Gastrocnemius medialis (tissue), 4 donors: ENCODE measurements at regions of chr11 and their contacts with region 1.

Region 1: GRCh38 chr11:111283945-111284481 is 14.3 kb upstream of the POU2AF3 start:
- DNase-seq: peak; percentile 54 to 57
- ATAC-seq: peak; percentile 74 to 88
- H3K4me3 ChIP-seq: peak overlapping the region in 2 of 4 donors; percentile 9 to 13
- H3K27ac ChIP-seq: peak overlapping the region; percentile 48 to 62 (median 56)
- H3K4me1 ChIP-seq: peaks cover 4 to 5% of the 10 kb centered on the region in 2 donors
- H3K27me3 ChIP-seq: no peaks in the 10 kb centered on the region
- CTCF ChIP-seq: no peak
- POLR2A ChIP-seq: no peak

Region 2: GRCh38 chr11:111250936-111251335 is 33.1 kb before region 1 on chr11:
- in situ Hi-C with region 1: no loop called
- intact Hi-C with region 1: no loop called
- DNase-seq: no peak
- ATAC-seq: no peak
- H3K4me3 ChIP-seq: no peak overlapping the region
- H3K27ac ChIP-seq: no peak overlapping the region
- H3K4me1 ChIP-seq: no peaks in the 10 kb centered on the region
- H3K27me3 ChIP-seq: no peaks in the 10 kb centered on the region
- CTCF ChIP-seq: no peak
- POLR2A ChIP-seq: no peak

Region 3: DNA sequence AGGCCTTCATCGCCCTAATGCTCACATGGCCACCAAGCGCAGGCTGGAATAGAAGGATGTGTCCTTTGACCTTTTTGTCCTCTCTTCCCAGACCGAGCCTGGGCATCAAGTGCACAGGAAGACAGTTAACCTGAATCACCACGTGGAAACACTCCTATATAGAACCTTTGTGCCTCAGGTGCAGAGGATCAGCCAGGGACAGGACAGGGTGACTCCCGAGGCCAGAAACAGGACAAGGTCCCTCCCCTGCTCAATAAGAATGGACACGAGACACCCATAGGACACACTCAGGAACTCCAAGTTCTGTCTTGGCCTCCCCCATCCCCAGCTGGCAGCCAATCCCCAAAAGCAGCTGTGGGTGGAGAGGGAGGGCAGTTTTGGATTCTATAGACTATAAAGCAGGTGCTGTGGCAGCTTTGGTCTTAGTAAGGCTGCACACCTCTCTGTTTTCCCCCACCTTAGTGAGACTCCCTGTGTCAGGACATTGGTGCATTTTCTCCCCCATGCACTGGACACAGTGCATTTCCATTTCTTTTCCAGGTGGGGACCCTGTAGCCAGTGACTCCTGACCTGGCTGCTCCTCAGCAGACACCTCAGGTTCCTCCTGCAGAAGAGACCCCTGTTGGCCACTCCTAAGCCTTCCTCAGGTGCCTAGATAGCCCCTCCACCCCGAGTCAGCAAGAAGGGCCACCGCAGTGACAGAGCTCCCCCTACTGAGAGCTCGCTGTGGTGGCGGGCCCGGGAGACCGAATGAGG is 138.7 kb after region 1 on chr11:
- in situ Hi-C with region 1: loop called in 2 of 4 experiments (anchors 5 kb)
- intact Hi-C with region 1: loop called (anchors 1 kb)
- DNase-seq: no peak
- ATAC-seq: peak; percentile 38 to 58
- H3K4me3 ChIP-seq: no peak overlapping the region
- H3K27ac ChIP-seq: no peak overlapping the region
- H3K4me1 ChIP-seq: peaks cover 7 to 14% of the 10 kb centered on the region in 2 donors
- H3K27me3 ChIP-seq: no peaks in the 10 kb centered on the region
- CTCF ChIP-seq: peak; percentile 21 to 66 (median 57)
- POLR2A ChIP-seq: no peak

Region 4: GRCh38 chr11:111429066-111429506 is 145.1 kb after region 1 on chr11:
- in situ Hi-C with region 1: loop called in 2 of 4 experiments (anchors 5 kb)
- intact Hi-C with region 1: no loop called
- DNase-seq: peak in 1 of 2 donors; percentile 63
- ATAC-seq: peak; percentile 74 to 76
- H3K4me3 ChIP-seq: no peak overlapping the region
- H3K27ac ChIP-seq: no peak overlapping the region
- H3K4me1 ChIP-seq: no peaks in the 10 kb centered on the region
- H3K27me3 ChIP-seq: no peaks in the 10 kb centered on the region
- CTCF ChIP-seq: peak in 4 of 5 experiments; percentile 31 to 56 (median 50)
- POLR2A ChIP-seq: no peak

Region 5: GRCh38 chr11:111441443-111441842 is 157.4 kb after region 1 on chr11:
- in situ Hi-C with region 1: loop called in 3 of 4 experiments (anchors 5 kb)
- intact Hi-C with region 1: loop called (anchors 1 kb)
- DNase-seq: no peak
- ATAC-seq: no peak
- H3K4me3 ChIP-seq: no peak overlapping the region
- H3K27ac ChIP-seq: no peak overlapping the region
- H3K4me1 ChIP-seq: peaks cover 4 to 8% of the 10 kb centered on the region in 2 donors
- H3K27me3 ChIP-seq: no peaks in the 10 kb centered on the region
- CTCF ChIP-seq: no peak
- POLR2A ChIP-seq: no peak

Region 6: DNA sequence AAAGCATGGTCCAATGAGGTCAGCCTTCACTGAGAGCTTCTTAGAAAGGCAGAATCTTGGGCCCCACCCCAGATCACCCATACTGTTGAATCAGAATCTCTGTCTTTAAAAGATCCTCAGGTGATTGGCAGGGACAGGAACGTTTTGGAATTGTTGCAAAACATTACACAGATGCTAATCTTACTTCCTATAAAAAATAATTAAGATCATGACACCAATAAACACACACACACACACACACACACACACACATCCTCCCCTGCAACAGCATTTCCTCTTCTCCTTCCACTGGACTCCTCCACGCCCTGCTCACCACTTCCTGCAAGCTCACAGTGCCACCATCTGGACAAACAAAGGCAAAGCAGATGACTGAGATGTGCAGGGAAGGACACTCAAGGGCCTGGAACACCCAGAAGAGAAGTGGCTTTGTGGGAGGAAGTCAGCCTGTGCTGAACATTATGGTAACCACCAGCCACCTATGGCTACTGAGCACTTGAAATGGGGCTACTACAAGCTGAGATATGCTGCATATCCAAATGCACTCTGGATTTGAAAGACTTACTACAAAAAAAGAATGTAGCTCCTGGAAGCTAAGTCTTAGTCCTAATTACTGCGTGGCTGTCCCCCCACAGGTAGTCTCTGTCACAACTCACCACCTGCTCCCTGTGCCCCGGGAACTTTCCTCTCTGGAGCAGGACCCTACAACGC is 162.5 kb after region 1 on chr11:
- in situ Hi-C with region 1: loop called in 3 of 4 experiments (anchors 5 kb)
- intact Hi-C with region 1: loop called (anchors 1 kb)
- DNase-seq: peak; percentile 72
- ATAC-seq: peak; percentile 91 to 96
- H3K4me3 ChIP-seq: no peak overlapping the region
- H3K27ac ChIP-seq: no peak overlapping the region
- H3K4me1 ChIP-seq: peaks cover 14% of the 10 kb centered on the region in 2 donors
- H3K27me3 ChIP-seq: no peaks in the 10 kb centered on the region
- CTCF ChIP-seq: peak; percentile 66 to 88 (median 80)
- POLR2A ChIP-seq: no peak